Heart right ventricle (tissue), 16 donors: ENCODE measurements at regions of chr20 and their contacts with region 1.

Region 1: DNA sequence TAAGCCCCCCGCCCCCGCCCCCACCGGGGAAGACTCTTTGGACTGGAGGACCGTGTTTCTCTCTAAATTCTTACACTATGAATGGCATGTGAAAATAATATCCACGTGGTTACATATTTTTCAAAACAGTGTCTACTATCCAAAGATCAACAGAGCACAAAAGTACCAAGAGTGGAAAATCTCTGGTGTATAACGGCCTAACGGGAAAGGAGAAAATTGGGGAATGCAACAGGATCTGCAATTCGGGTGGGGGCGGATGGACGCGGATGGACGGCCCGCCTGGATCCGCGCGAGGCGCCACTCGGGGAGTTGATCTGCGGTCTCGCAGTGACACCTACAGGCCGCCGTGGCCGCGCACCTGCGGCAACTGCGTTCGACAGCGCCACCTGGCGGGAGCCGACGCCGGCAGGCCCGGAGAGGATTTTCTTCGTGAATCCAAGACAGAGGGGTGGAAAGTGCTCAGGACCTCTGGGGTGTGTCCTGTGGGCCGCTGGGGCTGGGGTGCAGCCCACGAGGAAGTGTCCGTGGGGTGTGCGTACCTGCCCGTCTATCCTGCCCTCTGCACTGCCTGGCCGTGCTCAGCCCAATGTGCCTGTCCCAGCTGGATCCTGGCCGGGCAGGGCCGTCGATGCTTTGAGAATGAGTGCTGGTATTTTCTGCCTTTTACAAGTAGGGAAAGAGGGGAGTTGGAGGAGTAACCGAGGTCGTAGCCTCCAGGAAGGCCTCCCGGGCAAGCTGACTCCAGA is 18.6 kb downstream of the ANKRD60 start:
- DNase-seq: peak; percentile 75 to 89
- ATAC-seq: peak; percentile 79 to 92 (median 90)
- H3K4me3 ChIP-seq: no peak overlapping the region
- H3K27ac ChIP-seq: no peak overlapping the region
- H3K4me1 ChIP-seq: peaks cover 0 to 3% (median 0%) of the 10 kb centered on the region in 9 donors
- H3K27me3 ChIP-seq: peaks cover 0 to 24% (median 17%) of the 10 kb centered on the region in 7 donors
- CTCF ChIP-seq: peak; percentile 100

Region 2: DNA sequence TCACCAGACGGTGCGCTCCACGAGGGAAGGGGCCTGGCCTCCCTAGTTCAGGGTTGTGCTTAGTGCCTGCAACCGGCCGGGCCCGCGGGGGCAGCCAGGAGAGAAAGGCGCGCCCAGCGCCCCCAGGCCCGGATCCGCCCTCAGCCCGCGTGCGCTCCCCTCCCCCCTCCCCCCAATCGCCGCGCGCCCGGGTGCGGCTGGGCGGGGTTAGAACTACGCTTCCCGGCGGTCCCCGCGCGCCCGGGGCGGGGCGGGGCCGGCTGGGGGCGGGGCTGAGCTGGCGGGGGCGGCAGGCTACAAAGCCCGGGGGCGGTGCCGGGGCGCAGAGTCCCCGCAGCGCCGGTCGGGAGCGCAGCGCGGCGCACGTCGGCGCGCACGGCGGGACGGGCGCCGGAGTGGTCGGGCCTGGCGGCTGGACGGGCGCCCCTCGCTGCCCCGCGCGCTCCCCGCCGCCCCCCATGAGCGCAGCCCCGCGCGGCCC is 818.7 kb before region 1 on chr20 and contains the start of gene RBM38:
- intact Hi-C with region 1: loop called in 2 of 10 experiments (anchors 10 kb)
- DNase-seq: peak; percentile 60 to 78
- ATAC-seq: peak; percentile 43 to 83 (median 66)
- H3K4me3 ChIP-seq: peak within 1 kb of the TSS; percentile 69 to 84 (median 73)
- H3K27ac ChIP-seq: peak within 1 kb of the TSS; percentile 88 to 97 (median 90)
- H3K4me1 ChIP-seq: peaks cover 14 to 64% (median 58%) of the 10 kb centered on the region in 9 donors
- H3K27me3 ChIP-seq: no peaks in the 10 kb centered on the region
- CTCF ChIP-seq: no peak
- total RNA-seq, gene RBM38: 35.5 to 119 (median 50.2) TPM

Region 3: GRCh38 chr20:57514273-57514751 is 695.5 kb before region 1 on chr20:
- intact Hi-C with region 1: loop called (anchors 1 to 5 kb)
- DNase-seq: peak; percentile 31 to 72
- ATAC-seq: peak; percentile 70 to 87 (median 81)
- H3K4me3 ChIP-seq: no peak overlapping the region
- H3K27ac ChIP-seq: no peak overlapping the region
- H3K4me1 ChIP-seq: peaks cover 0 to 8% (median 0%) of the 10 kb centered on the region in 9 donors
- H3K27me3 ChIP-seq: peaks cover 0 to 31% (median 7%) of the 10 kb centered on the region in 7 donors
- CTCF ChIP-seq: peak; percentile 58 to 87 (median 78)

Region 4: GRCh38 chr20:57526087-57526884 is 683.5 kb before region 1 on chr20:
- intact Hi-C with region 1: loop called in 1 of 10 experiments (anchors 5 kb)
- DNase-seq: no peak
- ATAC-seq: no peak
- H3K4me3 ChIP-seq: no peak overlapping the region
- H3K27ac ChIP-seq: no peak overlapping the region
- H3K4me1 ChIP-seq: no peaks in the 10 kb centered on the region
- H3K27me3 ChIP-seq: peaks cover 0 to 4% (median 0%) of the 10 kb centered on the region in 7 donors
- CTCF ChIP-seq: peak in 1 of 9 donors; percentile 8

Region 5: DNA sequence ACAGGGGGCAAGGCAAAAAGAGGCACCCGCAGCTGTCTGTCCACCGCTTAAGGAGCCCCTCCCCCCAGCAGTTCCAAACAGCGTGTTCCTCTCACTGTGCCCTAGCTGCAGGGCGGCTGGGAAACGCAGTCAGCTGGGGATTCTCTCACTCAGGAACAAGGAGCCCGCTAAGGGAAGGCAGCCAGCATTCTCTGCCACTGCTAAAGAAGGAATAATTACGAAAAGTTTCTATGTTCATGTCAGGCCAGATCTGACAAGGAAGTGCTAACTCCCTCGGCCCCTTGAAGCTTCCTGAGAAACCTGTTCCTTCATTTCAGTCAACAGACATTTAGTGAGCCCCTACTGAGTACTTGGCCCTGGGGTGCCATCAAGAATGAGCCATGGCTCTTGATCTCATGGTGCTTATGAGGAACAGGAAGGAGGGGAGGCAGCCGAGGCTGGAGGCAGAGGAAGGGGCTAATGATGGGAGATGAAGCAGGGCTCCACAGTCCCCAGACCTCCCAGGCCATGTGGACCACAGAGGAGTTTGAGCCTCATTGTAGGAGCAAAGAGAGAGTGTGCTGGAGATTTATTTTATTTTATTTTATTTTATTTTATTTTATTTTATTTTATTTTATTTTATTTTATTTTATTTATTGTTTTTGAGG is 398.3 kb before region 1 on chr20:
- intact Hi-C with region 1: no loop called
- DNase-seq: no peak
- ATAC-seq: no peak
- H3K4me3 ChIP-seq: no peak overlapping the region
- H3K27ac ChIP-seq: no peak overlapping the region
- H3K4me1 ChIP-seq: peaks cover 0 to 32% (median 7%) of the 10 kb centered on the region in 9 donors
- H3K27me3 ChIP-seq: peaks cover 0 to 5% (median 0%) of the 10 kb centered on the region in 7 donors
- CTCF ChIP-seq: no peak

Region 6: GRCh38 chr20:57964011-57964862 is 245.6 kb before region 1 on chr20:
- intact Hi-C with region 1: no loop called
- DNase-seq: peak; percentile 23 to 28
- ATAC-seq: peak; percentile 43 to 72 (median 58)
- H3K4me3 ChIP-seq: no peak overlapping the region
- H3K27ac ChIP-seq: peak overlapping the region in 8 of 10 donors; percentile 5 to 80 (median 54)
- H3K4me1 ChIP-seq: peaks cover 3 to 44% (median 7%) of the 10 kb centered on the region in 9 donors
- H3K27me3 ChIP-seq: peaks cover 0 to 27% (median 14%) of the 10 kb centered on the region in 7 donors
- CTCF ChIP-seq: no peak

Region 7: GRCh38 chr20:58271606-58272402 is 62.0 kb after region 1 on chr20:
- intact Hi-C with region 1: no loop called
- DNase-seq: no peak
- ATAC-seq: no peak
- H3K4me3 ChIP-seq: no peak overlapping the region
- H3K27ac ChIP-seq: no peak overlapping the region
- H3K4me1 ChIP-seq: peaks cover 0 to 5% (median 0%) of the 10 kb centered on the region in 9 donors
- H3K27me3 ChIP-seq: no peaks in the 10 kb centered on the region
- CTCF ChIP-seq: no peak

Region 8: DNA sequence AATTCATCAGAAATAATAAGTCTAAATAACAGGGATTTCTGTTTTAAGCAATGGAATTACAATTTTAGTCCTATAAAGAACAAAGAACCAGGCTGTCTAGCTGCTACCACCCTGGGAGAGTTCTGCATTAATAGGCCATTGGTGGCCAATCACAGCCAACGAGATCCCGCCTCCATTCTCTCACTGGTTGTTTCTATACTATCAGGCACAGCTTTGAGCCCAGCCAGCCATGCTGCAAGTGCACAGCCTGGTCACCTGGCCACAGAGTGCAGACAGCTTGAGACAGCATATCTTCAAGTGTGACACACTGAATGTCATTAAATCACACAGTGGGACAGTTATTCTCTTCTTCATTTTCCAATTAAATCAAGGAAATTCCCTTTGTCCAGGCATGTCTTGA is 83.6 kb after region 1 on chr20:
- intact Hi-C with region 1: no loop called
- DNase-seq: peak in 1 of 2 donors; percentile 16
- ATAC-seq: peak in 5 of 8 donors; percentile 49 to 85 (median 68)
- H3K4me3 ChIP-seq: no peak overlapping the region
- H3K27ac ChIP-seq: no peak overlapping the region
- H3K4me1 ChIP-seq: peaks cover 0 to 15% (median 0%) of the 10 kb centered on the region in 9 donors
- H3K27me3 ChIP-seq: no peaks in the 10 kb centered on the region
- CTCF ChIP-seq: no peak